ENCODE measurements at regions of chr12 and their contacts with region 1.

Region 1: DNA sequence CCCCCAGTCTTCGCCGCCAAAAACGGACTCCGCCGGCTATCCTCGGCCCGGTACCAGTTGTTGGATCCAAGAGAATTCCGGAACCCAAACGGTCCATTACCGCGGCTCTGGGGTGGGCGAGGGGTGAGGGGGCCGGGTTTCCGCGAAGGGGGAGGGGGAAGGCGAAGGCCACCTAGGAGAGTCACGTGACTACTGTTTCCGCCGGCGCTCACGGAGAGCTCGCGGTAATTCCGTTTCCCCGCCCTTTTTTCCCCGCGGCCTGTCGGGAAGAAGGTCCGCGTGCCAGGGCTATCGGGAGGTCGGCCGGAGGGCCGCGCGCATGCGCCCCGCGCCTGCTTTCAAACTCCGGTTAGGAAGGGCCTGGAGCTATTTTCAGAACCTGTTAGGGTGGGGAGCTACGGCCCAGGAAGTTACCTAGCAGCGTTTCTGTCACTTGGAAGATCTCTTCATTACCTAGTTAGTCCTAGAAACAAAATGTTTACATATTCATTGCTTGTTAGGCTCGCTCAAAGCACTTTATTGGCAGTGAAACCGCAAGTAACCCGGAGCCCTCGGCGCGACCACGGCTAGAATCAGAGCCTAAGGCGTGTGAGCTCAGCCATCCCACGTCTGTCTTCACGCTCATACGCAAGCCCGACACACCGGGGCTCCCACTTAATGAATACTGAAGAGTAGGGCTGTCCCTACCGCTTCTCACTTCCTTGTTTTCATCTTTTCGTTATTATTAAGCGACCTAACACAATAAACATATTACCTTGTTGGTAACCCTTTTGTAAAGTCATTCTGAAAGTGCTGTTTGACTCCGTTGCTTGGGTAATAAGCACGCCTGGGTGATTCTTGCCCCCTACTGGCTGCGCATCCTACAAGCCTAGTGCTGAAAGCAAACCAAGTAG is 624 bp upstream of the SBNO1 start:
- DNase-seq: peak; percentile 92
- H3K4me3 ChIP-seq: peak overlapping the region; percentile 79
- H3K27me3 ChIP-seq: no peaks in the 10 kb centered on the region
- CTCF ChIP-seq: peak; percentile 91

Region 2: DNA sequence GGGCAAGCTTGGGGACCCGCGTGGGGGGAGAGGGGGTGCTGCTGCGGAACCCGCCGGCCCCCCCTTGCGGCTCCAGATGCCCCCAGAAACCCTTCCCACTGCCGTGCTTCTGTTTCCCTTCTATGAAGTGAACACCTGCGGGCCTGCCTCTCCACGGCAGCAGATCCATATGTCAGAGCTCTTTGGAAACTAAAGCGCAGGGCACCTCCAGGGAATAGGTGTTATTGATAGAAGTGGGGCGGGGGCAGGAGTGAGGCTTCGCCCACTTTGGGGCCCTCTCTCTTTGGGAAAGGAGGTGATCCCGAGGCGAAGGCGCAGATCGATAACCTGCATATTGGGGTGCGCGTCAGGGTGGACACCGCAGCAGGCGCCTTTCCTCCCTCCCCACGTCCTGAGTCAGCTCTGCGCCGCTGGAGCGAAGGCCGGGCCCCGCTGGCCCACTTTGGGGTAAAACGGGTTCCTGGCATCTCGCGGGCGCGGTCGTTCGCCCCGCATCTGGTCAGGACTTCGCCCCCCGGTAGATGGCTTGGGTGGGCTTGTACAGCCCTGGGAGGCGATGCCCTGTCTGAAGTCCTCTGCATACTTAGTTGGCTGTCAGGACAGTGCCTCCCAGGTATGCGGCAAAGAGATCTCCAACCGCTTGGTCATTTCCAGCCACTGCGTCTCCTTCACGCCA is 19.2 kb after region 1 on chr12:
- CTCF ChIA-PET with region 1: interaction called, 17 read pairs
- POLR2A ChIA-PET with region 1: interaction called, 8 read pairs
- DNase-seq: no peak
- H3K4me3 ChIP-seq: peak overlapping the region; percentile 89
- H3K27me3 ChIP-seq: no peaks in the 10 kb centered on the region
- CTCF ChIP-seq: no peak

Region 3: DNA sequence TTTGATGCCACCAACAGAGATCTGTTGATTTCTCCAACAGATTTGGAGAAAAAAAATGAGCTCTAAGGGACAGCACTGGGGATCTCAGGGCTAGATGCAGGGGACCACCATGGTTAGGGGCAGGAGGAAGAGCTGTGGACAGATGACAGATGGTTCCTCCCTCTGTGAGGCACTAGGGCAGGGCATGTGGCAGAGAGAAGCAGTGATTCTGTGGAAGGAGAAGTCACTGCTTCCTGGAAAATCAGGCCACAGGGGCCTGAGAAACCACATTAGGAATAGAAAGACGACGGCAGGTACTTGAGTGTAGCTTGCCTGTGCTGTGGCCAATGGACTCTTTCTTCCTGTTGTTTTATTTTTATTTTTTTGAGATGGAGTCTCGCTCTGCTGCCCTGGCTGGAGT is 194.2 kb after region 1 on chr12:
- CTCF ChIA-PET with region 1: no interaction called
- POLR2A ChIA-PET with region 1: interaction called, 12 read pairs
- DNase-seq: no peak
- H3K4me3 ChIP-seq: no peak overlapping the region
- H3K27me3 ChIP-seq: peaks cover 7% of the 10 kb centered on the region
- CTCF ChIP-seq: no peak

Measured in BJ (cell line).